A673 (cell line): ENCODE measurements at regions of chr22 and their contacts with region 1.

Region 1: DNA sequence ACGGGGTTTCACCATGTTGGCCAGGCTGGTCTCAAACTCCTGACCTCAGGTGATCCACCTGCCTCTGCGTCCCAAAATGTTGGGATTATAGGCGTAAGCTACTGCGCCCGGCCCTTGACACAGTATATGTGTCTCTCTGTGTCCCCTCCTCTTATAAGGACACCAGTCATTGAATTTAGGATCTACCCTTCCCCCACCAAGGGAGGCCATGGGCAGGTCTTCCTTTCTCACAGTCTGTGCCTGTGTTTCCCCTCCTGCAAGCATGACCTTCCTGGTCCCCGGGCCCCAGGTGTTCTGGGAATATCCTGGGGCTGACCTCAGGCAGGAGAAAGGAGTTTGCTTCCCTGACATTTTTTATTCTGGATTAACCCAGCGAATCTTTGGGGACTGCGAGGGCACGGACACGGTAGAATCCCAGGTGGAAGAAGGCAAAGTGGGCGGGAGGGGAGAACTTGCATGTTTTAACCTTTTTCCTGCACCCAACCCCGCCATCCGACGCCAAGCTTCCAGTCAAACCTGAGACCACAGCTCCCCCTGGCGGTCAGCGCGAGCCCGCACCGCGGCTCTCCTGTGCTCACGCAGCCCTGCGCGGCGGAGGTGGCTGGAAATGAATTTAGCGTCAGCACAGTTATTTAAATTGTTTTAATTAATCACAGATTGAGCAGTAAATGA is 42.1 kb upstream of the ISX start:
- DNase-seq: peak; percentile 60
- H3K4me3 ChIP-seq: no peak overlapping the region
- H3K27ac ChIP-seq: no peak overlapping the region
- H3K4me1 ChIP-seq: no peaks in the 10 kb centered on the region
- H3K27me3 ChIP-seq: no peaks in the 10 kb centered on the region
- CTCF ChIP-seq: peak; percentile 96

Region 2: GRCh38 chr22:33302049-33302545 is 1721.7 kb before region 1 on chr22:
- CTCF ChIA-PET with region 1: no interaction called
- POLR2A ChIA-PET with region 1: no interaction called
- intact Hi-C with region 1: loop called (anchors 2 kb)
- DNase-seq: peak; percentile 76
- H3K4me3 ChIP-seq: no peak overlapping the region
- H3K27ac ChIP-seq: no peak overlapping the region
- H3K4me1 ChIP-seq: no peaks in the 10 kb centered on the region
- H3K27me3 ChIP-seq: no peaks in the 10 kb centered on the region
- CTCF ChIP-seq: peak; percentile 90

Region 3: DNA sequence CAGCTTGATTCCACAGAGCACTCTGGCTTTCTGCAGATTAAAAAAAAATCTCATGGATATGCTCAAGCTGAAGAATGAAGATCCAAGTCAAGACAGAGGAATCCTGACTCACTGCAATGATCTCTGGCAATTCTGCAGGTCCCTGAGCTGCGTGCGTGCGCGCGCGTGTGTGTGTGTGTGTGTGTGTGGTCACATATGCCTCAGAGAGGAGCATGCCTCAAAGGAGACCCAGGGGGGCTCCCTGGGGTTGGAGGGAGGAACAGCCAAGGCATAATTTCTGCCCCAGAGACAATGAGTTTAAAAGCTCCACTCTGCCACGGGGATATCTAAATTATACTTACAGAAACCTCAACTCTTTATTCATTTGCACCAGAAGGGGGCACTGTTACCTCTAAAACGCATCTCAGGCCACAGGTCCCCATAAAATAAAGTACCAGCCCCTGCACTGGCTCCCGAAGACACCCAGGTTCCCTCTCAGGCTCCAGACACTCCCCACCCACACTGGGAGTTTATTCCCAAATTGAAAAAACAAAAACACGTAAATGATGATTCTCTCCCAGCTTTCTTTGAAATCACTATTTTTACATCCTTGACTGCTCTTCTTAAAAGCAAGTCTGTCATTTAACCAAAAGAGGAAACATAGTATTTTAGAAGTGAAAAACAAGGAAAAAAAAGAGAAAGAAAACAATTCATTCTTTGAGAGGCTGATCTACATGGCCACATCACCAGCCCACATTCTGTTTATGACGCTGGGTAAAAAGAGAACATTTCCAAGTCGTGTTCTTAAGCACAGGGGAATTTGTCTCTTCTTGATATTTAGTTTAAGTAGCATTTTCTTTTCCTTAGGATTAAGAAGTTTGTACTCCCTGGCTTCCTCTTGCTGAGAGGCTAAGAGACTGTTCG is 1504.5 kb before region 1 on chr22:
- CTCF ChIA-PET with region 1: no interaction called
- POLR2A ChIA-PET with region 1: no interaction called
- intact Hi-C with region 1: loop called (anchors 10 kb)
- DNase-seq: peak; percentile 19
- H3K4me3 ChIP-seq: no peak overlapping the region
- H3K27ac ChIP-seq: no peak overlapping the region
- H3K4me1 ChIP-seq: no peaks in the 10 kb centered on the region
- H3K27me3 ChIP-seq: no peaks in the 10 kb centered on the region
- CTCF ChIP-seq: peak; percentile 46

Region 4: GRCh38 chr22:33920927-33921524 is 1102.8 kb before region 1 on chr22:
- CTCF ChIA-PET with region 1: no interaction called
- POLR2A ChIA-PET with region 1: no interaction called
- intact Hi-C with region 1: loop called (anchors 10 kb)
- DNase-seq: peak; percentile 2
- H3K4me3 ChIP-seq: no peak overlapping the region
- H3K27ac ChIP-seq: no peak overlapping the region
- H3K4me1 ChIP-seq: no peaks in the 10 kb centered on the region
- H3K27me3 ChIP-seq: peaks cover 42% of the 10 kb centered on the region
- CTCF ChIP-seq: no peak